SK-N-SH (cell line): ENCODE measurements at regions of chr6 and their contacts with region 1.

Region 1: GRCh38 chr6:53651764-53652401 is 13.7 kb downstream of the KLHL31 start:
- DNase-seq: peak; percentile 80
- H3K4me3 ChIP-seq: peak overlapping the region; percentile 52 to 56
- H3K27ac ChIP-seq: no peak overlapping the region
- H3K4me1 ChIP-seq: peaks cover 0 to 13% of the 10 kb centered on the region in 2 experiments; a peak in 1 of 4 replicates
- H3K27me3 ChIP-seq: peaks cover 17% of the 10 kb centered on the region
- CTCF ChIP-seq: no peak
- EP300 ChIP-seq: no peak
- RAD21 ChIP-seq: no peak

Region 2: GRCh38 chr6:53484476-53485280 is 167.2 kb before region 1 on chr6:
- CTCF ChIA-PET with region 1: interaction called, 31 read pairs
- POLR2A ChIA-PET with region 1: no interaction called
- DNase-seq: peak; percentile 27
- H3K4me3 ChIP-seq: peak overlapping the region in 1 of 2 experiments; percentile 19; a peak in 1 of 4 replicates
- H3K27ac ChIP-seq: no peak overlapping the region
- H3K4me1 ChIP-seq: peaks cover 0 to 8% of the 10 kb centered on the region in 2 experiments; a peak in 2 of 4 replicates
- H3K27me3 ChIP-seq: peaks cover 17% of the 10 kb centered on the region
- CTCF ChIP-seq: peak; percentile 99
- EP300 ChIP-seq: no peak
- RAD21 ChIP-seq: peak; percentile 98

Region 3: GRCh38 chr6:53544470-53545308 is 107.2 kb before region 1 on chr6 and contains the start of gene GCLC:
- CTCF ChIA-PET with region 1: interaction called, 20 read pairs
- POLR2A ChIA-PET with region 1: interaction called, 3 read pairs
- DNase-seq: peak; percentile 94
- H3K4me3 ChIP-seq: peak within 1 kb of the TSS; percentile 90 to 94
- H3K27ac ChIP-seq: peak within 1 kb of the TSS; percentile 72 to 88; a peak in 3 of 4 replicates
- H3K4me1 ChIP-seq: peaks cover 7 to 14% of the 10 kb centered on the region in 2 experiments; a peak in 3 of 4 replicates
- H3K27me3 ChIP-seq: no peaks in the 10 kb centered on the region
- CTCF ChIP-seq: peak; percentile 56
- EP300 ChIP-seq: peak in 1 of 2 experiments; percentile 19; a peak in 1 of 4 replicates
- RAD21 ChIP-seq: peak; percentile 52
- polyA plus RNA-seq, gene GCLC: 7.5 and 11.2 TPM in 2 replicates

Region 4: DNA sequence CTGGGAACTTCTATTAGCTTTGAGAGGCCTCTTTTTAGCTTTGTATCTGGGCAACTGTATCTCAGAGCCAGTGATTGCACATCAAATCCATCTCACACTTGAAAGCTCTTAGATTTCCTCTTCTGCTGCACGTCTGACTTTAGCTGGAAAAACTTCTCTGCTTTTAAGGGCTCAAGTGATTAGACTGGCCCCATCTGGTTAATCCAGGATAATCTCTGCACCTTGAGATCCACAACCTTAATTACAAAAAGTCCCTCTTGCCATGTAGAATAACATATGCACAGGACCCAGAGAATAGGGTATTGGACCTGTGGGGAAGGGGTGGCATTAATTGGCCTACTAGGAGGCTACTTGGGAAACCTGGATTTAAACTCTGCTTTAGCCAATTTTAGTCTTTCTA is 10.5 kb before region 1 on chr6:
- CTCF ChIA-PET with region 1: interaction called, 19 read pairs
- POLR2A ChIA-PET with region 1: no interaction called
- DNase-seq: no peak
- H3K4me3 ChIP-seq: no peak overlapping the region
- H3K27ac ChIP-seq: no peak overlapping the region
- H3K4me1 ChIP-seq: no peaks in the 10 kb centered on the region; a peak in 1 of 4 replicates
- H3K27me3 ChIP-seq: no peaks in the 10 kb centered on the region
- CTCF ChIP-seq: no peak
- EP300 ChIP-seq: no peak
- RAD21 ChIP-seq: no peak

Region 5: DNA sequence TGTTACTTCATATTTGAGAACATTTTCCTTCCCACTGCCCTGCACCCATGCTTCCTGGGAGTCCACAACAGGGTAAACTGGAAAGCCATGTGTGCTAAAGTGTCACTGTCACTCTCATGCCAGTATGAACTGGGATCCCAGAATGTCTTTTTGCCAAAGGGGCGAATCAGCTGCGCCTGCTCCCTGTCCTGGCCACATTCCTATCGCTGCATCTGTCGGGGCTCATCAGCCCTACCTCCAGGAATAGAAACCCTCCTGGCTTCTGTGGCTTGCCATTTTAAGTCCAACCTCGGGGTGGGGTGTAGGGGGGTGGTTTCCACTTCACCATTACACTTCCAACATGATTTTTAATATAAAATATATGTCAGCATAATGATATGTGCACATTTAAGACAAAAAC is 12.7 kb after region 1 on chr6:
- CTCF ChIA-PET with region 1: interaction called, 30 read pairs
- POLR2A ChIA-PET with region 1: no interaction called
- DNase-seq: no peak
- H3K4me3 ChIP-seq: no peak overlapping the region
- H3K27ac ChIP-seq: no peak overlapping the region
- H3K4me1 ChIP-seq: no peaks in the 10 kb centered on the region
- H3K27me3 ChIP-seq: peaks cover 3% of the 10 kb centered on the region; the same call in 1 of the 2 replicates
- CTCF ChIP-seq: no peak
- EP300 ChIP-seq: no peak
- RAD21 ChIP-seq: no peak